Panc1 (cell line): ENCODE measurements at regions of chr6 and their contacts with region 1.

Region 1: DNA sequence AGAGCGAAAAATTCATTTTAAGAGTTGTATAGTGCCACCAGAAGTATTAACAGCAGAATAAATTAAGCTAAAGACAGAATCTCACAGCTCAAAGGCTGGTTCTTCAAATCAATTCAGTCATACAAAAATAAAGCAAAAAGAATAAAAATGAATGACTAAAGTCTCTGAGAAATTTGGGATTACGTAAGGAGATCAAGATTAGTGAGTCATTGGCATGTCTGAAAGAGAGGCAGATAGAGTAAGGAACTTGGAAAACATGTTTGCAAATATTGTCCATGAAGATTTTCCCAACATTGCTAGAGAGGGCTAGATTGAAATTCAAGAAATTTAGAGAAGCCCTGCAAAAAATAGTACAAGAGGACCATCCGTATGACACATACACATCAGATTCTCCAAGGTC is 1413.9 kb upstream of the ADGRB3 start:
- DNase-seq: no peak
- ATAC-seq: no peak
- H3K4me3 ChIP-seq: no peak overlapping the region
- H3K27ac ChIP-seq: no peak overlapping the region
- H3K4me1 ChIP-seq: no peaks in the 10 kb centered on the region
- H3K27me3 ChIP-seq: no peaks in the 10 kb centered on the region
- CTCF ChIP-seq: no peak

Region 2: GRCh38 chr6:67199425-67199824 is 21.8 kb before region 1 on chr6:
- CTCF ChIA-PET with region 1: no interaction called
- POLR2A ChIA-PET with region 1: no interaction called
- in situ Hi-C with region 1: no loop called
- intact Hi-C with region 1: loop called (anchors 2 kb)
- DNase-seq: no peak
- ATAC-seq: no peak
- H3K4me3 ChIP-seq: no peak overlapping the region
- H3K27ac ChIP-seq: no peak overlapping the region
- H3K4me1 ChIP-seq: no peaks in the 10 kb centered on the region
- H3K27me3 ChIP-seq: no peaks in the 10 kb centered on the region
- CTCF ChIP-seq: no peak

Region 3: DNA sequence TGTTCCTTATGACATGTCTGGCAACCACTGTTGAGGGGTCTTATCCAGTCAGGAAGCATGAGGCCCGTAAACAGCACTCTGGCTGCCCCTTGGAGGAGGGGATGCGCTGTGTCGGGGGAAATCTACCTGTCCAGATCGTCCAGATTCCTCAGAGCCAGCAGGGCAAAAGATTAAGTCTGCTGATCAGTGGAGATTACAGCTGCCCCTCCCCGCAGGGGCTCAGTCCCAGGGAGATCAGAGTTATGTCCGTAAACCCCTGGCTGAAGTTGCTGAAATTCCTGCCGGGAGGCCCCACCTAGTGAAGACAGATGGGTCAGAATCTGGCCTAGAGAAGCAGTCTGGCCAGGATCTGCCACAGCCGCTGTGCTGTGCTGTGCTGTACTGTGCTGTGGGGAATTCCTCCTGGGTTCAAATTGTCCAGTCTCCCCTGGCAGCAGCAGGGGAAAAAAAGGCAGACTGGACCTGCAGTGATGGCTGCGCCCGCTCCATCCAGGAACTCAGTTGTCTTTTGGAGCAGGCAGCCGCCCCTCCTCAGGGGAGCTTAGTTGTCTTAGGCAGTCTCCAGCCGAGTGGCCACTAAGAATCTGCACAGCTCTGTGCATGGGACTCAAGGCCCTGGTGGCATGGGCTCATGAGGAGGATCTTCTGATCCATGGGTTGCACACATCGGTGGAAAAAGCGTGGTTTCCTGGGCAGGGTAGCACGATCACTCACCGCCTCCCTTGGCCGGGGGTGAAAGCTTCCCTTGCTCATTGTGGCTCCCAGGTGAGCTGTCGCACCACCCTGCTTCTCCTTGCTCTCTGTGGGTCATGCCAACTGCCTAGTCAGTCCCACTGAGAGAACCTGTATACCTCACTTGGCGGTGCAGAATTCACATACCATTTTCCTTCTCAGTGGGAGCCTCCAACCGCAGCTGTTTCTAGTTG is 45.0 kb after region 1 on chr6:
- CTCF ChIA-PET with region 1: no interaction called
- POLR2A ChIA-PET with region 1: no interaction called
- in situ Hi-C with region 1: no loop called
- intact Hi-C with region 1: no loop called
- DNase-seq: no peak
- ATAC-seq: no peak
- H3K4me3 ChIP-seq: no peak overlapping the region
- H3K27ac ChIP-seq: no peak overlapping the region
- H3K4me1 ChIP-seq: no peaks in the 10 kb centered on the region
- H3K27me3 ChIP-seq: no peaks in the 10 kb centered on the region
- CTCF ChIP-seq: no peak